Activated T-helper 2 cell treated with anti-CD3 and anti-CD28 coated beads, Interferon-gamma antibody, Interleukin-2, Interleukin-4, amounts not matched to agents 10 μg/mL and 5 μg/mL and 100 μg/mL, durations not matched to agents 14 hours and 24 hours and 36 hours (primary cell): ENCODE measurements at regions of chr15 and their contacts with region 1.

Region 1: DNA sequence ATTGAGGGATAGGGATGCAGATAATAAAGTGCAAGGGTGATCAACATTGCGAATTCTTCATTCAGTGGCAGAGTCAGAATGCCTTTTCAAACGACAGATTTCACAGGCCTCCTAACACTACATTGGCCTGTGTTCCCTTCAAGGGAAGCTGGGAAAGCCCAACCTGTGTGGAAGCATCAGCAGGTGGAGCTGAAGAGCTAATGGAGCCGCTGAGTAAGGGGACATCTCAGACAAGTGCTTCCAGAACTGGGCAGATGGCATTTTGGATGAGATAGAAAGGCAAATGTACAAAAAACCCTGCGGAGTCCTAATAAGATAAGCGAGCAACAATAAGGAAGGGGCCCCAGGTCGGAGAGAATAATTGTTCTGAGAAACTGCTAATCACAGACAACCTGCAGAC is 8.5 kb upstream of the SLC24A5 start:
- DNase-seq: no peak
- H3K4me3 Mint-ChIP-seq: no peak overlapping the region
- H3K27ac Mint-ChIP-seq: no peak overlapping the region
- H3K4me1 Mint-ChIP-seq: no peaks in the 10 kb centered on the region
- H3K27me3 Mint-ChIP-seq: peaks cover 11% of the 10 kb centered on the region

Region 2: GRCh38 chr15:47273864-47274263 is 838.4 kb before region 1 on chr15:
- intact Hi-C with region 1: no loop called
- DNase-seq: no peak
- H3K4me3 Mint-ChIP-seq: no peak overlapping the region
- H3K27ac Mint-ChIP-seq: no peak overlapping the region
- H3K4me1 Mint-ChIP-seq: no peaks in the 10 kb centered on the region
- H3K27me3 Mint-ChIP-seq: no peaks in the 10 kb centered on the region

Region 3: GRCh38 chr15:48250640-48251076 is 138.4 kb after region 1 on chr15:
- intact Hi-C with region 1: loop called (anchors 10 kb)
- DNase-seq: no peak
- H3K4me3 Mint-ChIP-seq: no peak overlapping the region
- H3K27ac Mint-ChIP-seq: no peak overlapping the region
- H3K4me1 Mint-ChIP-seq: no peaks in the 10 kb centered on the region
- H3K27me3 Mint-ChIP-seq: no peaks in the 10 kb centered on the region

Region 4: GRCh38 chr15:48298914-48299313 is 186.7 kb after region 1 on chr15:
- intact Hi-C with region 1: no loop called
- DNase-seq: no peak
- H3K4me3 Mint-ChIP-seq: no peak overlapping the region
- H3K27ac Mint-ChIP-seq: no peak overlapping the region
- H3K4me1 Mint-ChIP-seq: no peaks in the 10 kb centered on the region
- H3K27me3 Mint-ChIP-seq: peaks cover 9% of the 10 kb centered on the region